Heart right ventricle (tissue), 16 donors: ENCODE measurements at regions of chr9 and their contacts with region 1.

Region 1: DNA sequence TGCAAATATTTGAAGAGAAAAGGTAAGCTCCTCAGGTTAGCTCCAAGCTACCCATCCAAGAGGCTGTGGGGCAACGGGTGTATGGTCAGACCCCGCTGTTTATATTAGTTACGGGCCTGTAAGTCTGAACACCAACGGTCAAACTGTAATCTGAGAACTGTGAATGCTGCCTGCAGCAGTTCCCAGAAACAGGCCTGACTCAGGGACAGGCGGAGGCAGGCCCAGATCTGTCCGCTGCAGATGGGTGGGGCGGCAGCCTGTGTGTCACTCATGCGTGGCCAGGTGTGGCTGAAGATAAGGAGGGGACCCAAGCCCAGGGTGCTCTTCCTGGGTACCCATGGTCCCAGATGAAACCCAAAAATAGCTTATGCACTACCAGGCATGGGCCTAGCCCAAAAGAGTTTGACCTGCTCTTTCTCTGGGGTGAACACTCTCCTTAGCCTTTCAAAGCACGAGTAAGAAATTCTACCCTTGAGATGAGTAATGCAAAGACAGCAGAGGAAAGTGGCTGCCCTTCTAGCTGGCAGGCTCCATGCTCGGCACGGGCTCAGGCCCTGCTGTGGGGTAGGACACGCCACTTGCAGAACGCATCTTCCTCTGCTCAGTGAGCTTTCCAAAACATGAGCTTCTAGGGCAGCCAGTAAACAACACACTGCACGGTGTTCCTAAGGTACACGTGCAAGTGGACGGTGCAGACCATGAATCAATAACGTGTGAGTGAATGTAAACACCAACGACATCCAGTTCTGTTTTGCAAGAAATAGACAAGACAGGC is 9.1 kb downstream of the UBAC1 start:
- DNase-seq: no peak
- ATAC-seq: no peak
- H3K4me3 ChIP-seq: no peak overlapping the region
- H3K27ac ChIP-seq: no peak overlapping the region
- H3K4me1 ChIP-seq: peaks cover 0 to 29% (median 10%) of the 10 kb centered on the region in 9 donors
- H3K27me3 ChIP-seq: no peaks in the 10 kb centered on the region
- CTCF ChIP-seq: no peak

Region 2: GRCh38 chr9:135308821-135309762 is 643.0 kb before region 1 on chr9:
- intact Hi-C with region 1: no loop called
- DNase-seq: no peak
- ATAC-seq: no peak
- H3K4me3 ChIP-seq: no peak overlapping the region
- H3K27ac ChIP-seq: no peak overlapping the region
- H3K4me1 ChIP-seq: no peaks in the 10 kb centered on the region
- H3K27me3 ChIP-seq: peaks cover 0 to 56% (median 45%) of the 10 kb centered on the region in 7 donors
- CTCF ChIP-seq: no peak

Region 3: GRCh38 chr9:135864447-135865049 is 87.5 kb before region 1 on chr9:
- intact Hi-C with region 1: loop called in 1 of 10 experiments (anchors 10 kb)
- DNase-seq: peak; percentile 66 to 71
- ATAC-seq: peak in 6 of 8 donors; percentile 11 to 77 (median 38)
- H3K4me3 ChIP-seq: no peak overlapping the region
- H3K27ac ChIP-seq: no peak overlapping the region
- H3K4me1 ChIP-seq: peaks cover 0 to 12% (median 6%) of the 10 kb centered on the region in 9 donors
- H3K27me3 ChIP-seq: no peaks in the 10 kb centered on the region
- CTCF ChIP-seq: peak; percentile 71 to 92 (median 86)

Region 4: GRCh38 chr9:135914921-135915320 is 37.2 kb before region 1 on chr9:
- intact Hi-C with region 1: loop called in 2 of 10 experiments (anchors 5 kb)
- DNase-seq: no peak
- ATAC-seq: no peak
- H3K4me3 ChIP-seq: no peak overlapping the region
- H3K27ac ChIP-seq: no peak overlapping the region
- H3K4me1 ChIP-seq: peaks cover 0 to 5% (median 0%) of the 10 kb centered on the region in 9 donors
- H3K27me3 ChIP-seq: no peaks in the 10 kb centered on the region
- CTCF ChIP-seq: no peak